Right ventricle myocardium superior (tissue), 1 donor: ENCODE measurements at regions of chr17 and their contacts with region 1.

Region 1: GRCh38 chr17:78970834-78971773 is 8.6 kb downstream of the LGALS3BP start:
- DNase-seq: peak; percentile 90
- ATAC-seq: peak; percentile 57

Region 2: DNA sequence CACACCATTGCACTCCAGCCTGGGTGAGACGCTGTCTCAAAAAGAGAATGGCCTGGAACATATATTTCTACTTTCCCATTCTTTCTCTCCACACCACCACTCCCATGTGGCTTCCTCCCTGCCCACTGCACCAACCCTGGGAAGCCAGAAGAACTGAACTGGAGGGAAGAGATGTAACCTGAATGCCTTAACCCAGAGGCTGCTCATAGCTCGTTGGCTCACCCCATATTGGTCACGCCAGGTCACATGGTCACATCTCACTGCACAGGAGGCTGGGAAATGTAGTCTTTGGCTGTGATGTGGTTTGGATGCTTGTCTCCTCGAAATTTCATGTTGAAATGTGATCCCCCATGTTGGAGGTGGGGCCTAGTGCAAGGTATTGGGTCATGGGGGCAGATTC is 388.0 kb before region 1 on chr17:
- intact Hi-C with region 1: no loop called
- DNase-seq: no peak
- ATAC-seq: no peak

Region 3: GRCh38 chr17:78865682-78866390 is 105.3 kb before region 1 on chr17:
- intact Hi-C with region 1: loop called (anchors 1 kb)
- DNase-seq: peak; percentile 88
- ATAC-seq: peak; percentile 88

Region 4: DNA sequence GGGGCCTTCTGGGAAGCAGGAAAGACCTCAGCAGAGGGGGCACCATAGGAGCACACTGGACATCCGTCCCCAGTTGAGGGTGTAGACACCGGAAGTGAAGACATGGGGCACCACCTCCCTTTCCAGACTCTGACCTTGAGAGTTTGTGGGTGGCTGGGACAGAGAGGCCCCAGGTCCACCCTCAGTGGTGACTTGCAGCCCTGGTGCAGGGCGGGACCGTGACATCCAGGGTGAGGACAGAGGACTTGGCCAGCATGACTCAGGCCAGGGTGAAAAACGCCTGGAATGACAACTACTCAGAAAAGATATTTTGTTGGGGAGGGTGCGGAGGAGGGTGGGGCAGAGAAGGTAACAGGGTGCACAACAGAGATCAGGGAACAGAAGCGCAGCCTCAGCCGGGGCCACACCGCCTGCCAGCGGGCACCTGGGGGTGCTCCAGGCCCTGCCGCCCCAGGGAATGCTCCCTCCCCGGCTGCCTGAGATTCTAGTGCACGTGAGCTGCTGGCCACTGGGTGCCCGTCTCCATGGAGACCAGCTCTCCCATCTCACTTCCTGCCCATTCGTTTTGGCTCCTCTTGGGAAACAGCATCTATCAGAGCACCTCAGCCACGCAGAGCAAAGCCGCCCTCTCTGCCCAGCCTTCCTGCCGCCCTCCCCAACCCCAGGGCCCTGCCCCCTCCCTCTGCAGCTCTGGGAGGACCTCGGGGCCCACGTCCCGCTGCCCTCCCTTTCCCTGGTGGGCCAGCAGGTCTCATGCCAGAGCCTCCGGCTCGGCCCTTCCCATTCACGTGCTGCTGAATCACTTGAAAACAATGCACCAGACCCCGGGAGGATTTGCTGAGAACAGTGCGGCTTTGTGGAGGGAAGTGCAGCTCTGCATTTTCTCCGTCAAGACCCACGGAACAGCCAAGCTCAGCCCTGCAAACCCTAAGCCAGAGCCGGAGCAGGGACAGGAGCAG is 87.7 kb before region 1 on chr17:
- intact Hi-C with region 1: no loop called
- DNase-seq: peak; percentile 87
- ATAC-seq: peak; percentile 76

Region 5: GRCh38 chr17:79126139-79126538 is 155.0 kb after region 1 on chr17:
- intact Hi-C with region 1: no loop called
- DNase-seq: peak; percentile 54
- ATAC-seq: no peak